ENCODE measurements at regions of chr3 and their contacts with region 1.

Region 1: GRCh38 chr3:45524565-45524964 is 70.0 kb upstream of the LIMD1 start:
- DNase-seq: no peak
- H3K4me3 ChIP-seq: no peak overlapping the region
- H3K27ac ChIP-seq: no peak overlapping the region
- H3K4me1 ChIP-seq: peaks cover 9% of the 10 kb centered on the region
- H3K27me3 ChIP-seq: no peaks in the 10 kb centered on the region
- CTCF ChIP-seq: no peak

Region 2: DNA sequence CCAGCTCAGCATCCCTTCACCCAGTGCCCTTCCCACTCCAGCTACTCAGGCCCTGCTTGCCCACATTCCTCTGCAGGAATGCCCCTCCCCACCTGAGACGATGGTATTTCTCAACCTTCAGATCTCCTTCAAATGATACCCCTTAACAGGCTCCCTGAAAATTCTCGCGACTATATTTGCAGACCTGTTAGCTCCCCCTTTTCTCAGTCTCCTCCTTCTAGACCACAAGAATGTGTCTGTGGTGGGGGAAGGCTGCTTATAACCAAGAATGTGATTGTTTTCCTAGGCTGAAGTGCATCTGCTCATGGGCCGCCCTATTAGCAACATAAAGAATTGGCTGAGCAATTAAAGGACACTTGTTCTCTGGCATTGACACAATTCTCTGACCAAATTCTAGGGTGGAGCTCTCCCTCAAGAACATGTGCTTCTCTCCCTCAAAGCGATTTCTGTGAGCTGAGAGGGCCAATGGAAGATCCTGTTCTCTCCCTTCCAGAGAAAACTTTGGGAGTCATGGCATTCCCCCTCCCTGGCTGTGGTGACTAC is 50.9 kb after region 1 on chr3:
- CTCF ChIA-PET with region 1: no interaction called
- dilution Hi-C with region 1: loop called (anchors 5 kb)
- in situ Hi-C with region 1: no loop called
- intact Hi-C with region 1: no loop called
- DNase-seq: peak; percentile 83
- H3K4me3 ChIP-seq: no peak overlapping the region
- H3K27ac ChIP-seq: no peak overlapping the region
- H3K4me1 ChIP-seq: peaks cover 26% of the 10 kb centered on the region
- H3K27me3 ChIP-seq: no peaks in the 10 kb centered on the region
- CTCF ChIP-seq: no peak

Region 3: DNA sequence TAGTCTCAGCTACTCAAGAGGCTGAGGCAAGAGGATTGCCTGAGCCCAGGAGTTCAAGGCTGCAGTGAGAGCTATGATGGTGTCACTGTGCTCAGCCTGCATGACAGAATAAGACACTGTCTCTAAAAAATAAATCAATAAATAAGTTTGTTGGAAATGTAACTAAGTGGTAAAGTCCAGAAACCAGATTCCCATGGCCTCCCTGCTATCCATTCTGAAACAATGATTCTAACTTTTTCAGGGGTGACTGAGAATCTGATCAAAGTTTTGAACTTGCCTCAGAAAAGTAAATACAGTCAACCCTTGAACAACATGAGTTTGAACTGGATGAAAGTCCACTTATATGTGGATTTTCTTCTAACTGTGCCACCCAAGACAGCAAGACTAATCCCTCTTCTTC is 1541.1 kb after region 1 on chr3:
- CTCF ChIA-PET with region 1: no interaction called
- dilution Hi-C with region 1: no loop called
- in situ Hi-C with region 1: no loop called
- intact Hi-C with region 1: no loop called
- DNase-seq: no peak
- H3K4me3 ChIP-seq: no peak overlapping the region
- H3K27ac ChIP-seq: no peak overlapping the region
- H3K4me1 ChIP-seq: no peaks in the 10 kb centered on the region
- H3K27me3 ChIP-seq: no peaks in the 10 kb centered on the region
- CTCF ChIP-seq: no peak

Measured in mammary epithelial cell (primary cell).